ENCODE measurements at regions of chr4 and their contacts with region 1.

Region 1: DNA sequence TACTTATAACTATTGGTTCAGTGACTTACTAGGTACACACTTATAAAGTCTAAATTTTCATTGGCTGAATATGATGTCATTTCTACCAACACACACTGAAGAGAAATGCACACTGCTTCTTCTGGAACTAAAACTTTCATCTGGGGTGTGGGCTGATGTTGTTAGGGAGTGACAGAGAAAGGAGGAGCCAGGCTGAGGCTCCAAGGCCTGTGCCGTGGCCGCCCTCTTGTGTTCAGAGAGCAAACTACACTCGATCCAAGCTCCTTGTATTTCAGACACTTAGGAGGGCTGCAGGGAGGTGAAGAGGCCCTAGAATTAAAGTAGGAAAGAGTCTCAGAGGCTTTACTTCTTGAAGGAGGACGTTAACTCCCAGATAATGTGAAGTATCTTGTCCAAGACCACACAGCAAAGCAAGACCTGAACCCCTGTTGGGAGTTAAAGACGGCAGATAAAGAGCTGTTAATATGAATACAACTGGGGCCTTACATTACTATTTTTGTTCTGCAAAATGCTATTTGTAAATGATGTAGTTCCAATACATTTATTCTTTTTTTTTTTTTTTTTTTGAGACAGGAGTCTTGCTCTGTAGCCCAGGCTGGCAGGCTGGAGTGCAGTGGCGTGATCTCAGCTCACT is 137.5 kb downstream of the AFAP1 start:
- DNase-seq: peak; percentile 70 to 98 (median 88)

Region 2: DNA sequence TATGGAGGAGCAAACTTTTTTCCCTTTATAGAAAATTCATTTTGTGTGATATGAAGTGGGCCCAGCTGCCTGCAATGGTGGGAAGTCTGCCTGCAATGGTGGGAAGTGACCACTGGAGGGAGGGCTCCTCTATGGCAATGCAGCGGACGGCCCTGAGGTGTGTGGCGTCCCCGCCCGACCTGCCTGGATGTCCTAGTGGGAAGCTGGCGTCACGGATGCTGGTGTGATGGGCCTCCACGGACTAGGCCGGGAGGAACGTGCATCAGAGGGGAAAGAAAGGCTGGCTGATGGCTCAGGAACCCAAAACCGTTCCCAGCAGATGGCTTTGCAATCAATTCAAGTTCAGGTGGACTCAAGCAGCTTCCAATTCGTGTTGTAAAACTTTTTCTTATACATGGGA is 40.5 kb before region 1 on chr4:
- intact Hi-C with region 1: loop called (anchors 5 kb)
- DNase-seq: peak; percentile 59 to 97 (median 84)

Region 3: DNA sequence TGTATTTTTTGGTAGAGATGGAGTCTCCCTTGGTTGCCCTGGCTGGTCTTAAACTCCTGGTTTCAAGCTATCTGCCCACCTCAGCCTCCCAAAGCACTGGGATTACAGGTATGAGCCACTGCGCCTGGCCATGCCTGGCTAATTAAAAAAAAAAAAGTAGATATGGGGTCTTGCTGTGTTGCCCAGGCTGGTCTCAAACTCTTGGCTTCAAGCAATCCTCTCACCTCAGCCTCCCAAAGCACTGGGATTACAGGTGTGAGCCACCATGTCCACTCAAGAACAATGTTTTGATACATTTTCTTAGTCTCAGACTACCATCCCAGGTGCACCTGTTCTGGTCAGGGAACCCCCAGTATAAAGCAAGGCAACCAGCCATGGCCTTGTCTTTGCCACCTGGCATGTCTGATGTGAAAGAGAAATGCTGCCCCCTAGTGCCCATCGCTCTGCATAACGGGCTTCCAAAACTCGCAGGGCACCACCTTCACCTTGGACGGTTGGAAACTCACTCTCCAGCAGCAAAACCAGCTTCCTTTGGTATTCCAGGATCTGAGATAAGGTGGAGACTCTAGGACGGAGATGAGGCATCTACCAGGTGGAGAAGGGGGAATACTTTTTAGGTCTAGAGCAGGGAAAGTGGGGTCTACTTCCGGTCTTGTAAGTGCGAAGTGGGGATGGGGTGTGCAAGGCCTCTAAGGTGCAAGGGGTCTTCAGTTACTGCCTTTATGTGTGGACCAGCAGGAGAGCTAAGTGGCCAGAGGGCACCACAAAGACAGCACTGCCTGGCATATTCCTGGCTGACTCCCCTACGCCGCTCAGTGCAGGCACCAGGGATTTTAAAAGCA is 185.2 kb after region 1 on chr4:
- intact Hi-C with region 1: loop called (anchors 1 kb)
- DNase-seq: peak in 9 of 10 donors; percentile 62 to 95 (median 76)

Measured in posterior cingulate gyrus (tissue), 11 donors.